GM10248 (cell line): ENCODE measurements at regions of chr2 and their contacts with region 1.

Region 1: DNA sequence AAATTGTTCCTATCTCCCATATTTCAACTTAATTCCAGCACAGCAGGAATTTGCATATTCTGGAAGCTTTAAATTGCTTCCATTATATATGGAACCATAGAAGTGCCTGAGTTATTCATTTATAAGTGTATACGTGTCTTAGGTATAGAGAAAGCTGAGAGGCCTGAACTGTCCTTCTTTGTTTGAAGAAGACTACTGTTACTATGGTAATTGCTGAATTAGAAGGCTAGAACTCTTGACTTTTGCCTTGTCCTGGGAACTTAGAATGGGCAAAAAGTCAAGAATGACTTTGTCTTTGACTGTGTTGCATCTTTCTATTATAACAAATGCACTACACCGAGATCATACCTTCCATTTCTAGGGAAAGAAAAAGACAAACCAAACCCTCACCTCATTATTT is 15.7 kb downstream of the CAMKMT start:
- DNase-seq: no peak
- CTCF ChIP-seq: no peak

Region 2: GRCh38 chr2:44392338-44392943 is 15.0 kb after region 1 on chr2:
- CTCF ChIA-PET with region 1: interaction called, 12 read pairs
- POLR2A ChIA-PET with region 1: interaction called, 4 read pairs
- DNase-seq: no peak
- CTCF ChIP-seq: peak; percentile 48